ENCODE measurements at regions of chr21 and their contacts with region 1.

Region 1: DNA sequence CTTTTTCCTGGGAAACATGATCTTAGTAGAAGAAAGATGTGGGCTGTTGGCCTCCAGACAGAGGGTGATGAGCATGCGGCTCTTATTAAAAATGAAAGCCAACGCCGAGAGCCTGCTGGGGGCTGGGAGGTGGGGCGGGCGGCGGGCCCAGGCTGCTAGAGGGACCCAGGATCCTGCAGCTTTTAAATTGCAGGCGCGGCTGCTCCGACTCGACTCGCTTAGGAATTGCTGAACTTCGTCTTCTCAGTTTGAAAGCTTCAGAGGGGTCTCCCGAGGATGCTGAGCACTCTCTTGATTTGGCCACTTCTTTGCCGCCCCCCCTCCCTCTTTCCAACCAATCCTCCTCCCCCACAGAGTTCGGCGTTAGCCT is 1.2 kb downstream of the AGPAT3 start:
- DNase-seq: no peak
- H3K4me3 Mint-ChIP-seq: peak overlapping the region; percentile 92
- H3K27ac Mint-ChIP-seq: peak overlapping the region; percentile 92
- H3K4me1 Mint-ChIP-seq: peaks cover 44% of the 10 kb centered on the region
- H3K27me3 Mint-ChIP-seq: peaks cover 2% of the 10 kb centered on the region

Region 2: GRCh38 chr21:43574741-43575472 is 291.3 kb before region 1 on chr21:
- intact Hi-C with region 1: no loop called
- DNase-seq: no peak
- H3K4me3 Mint-ChIP-seq: no peak overlapping the region
- H3K27ac Mint-ChIP-seq: no peak overlapping the region
- H3K4me1 Mint-ChIP-seq: no peaks in the 10 kb centered on the region
- H3K27me3 Mint-ChIP-seq: peaks cover 11% of the 10 kb centered on the region

Region 3: GRCh38 chr21:43740497-43741156 is 125.6 kb before region 1 on chr21:
- intact Hi-C with region 1: no loop called
- DNase-seq: no peak
- H3K4me3 Mint-ChIP-seq: no peak overlapping the region
- H3K27ac Mint-ChIP-seq: no peak overlapping the region
- H3K4me1 Mint-ChIP-seq: peaks cover 5% of the 10 kb centered on the region
- H3K27me3 Mint-ChIP-seq: no peaks in the 10 kb centered on the region

Region 4: GRCh38 chr21:43789276-43790009 is 76.8 kb before region 1 on chr21 and contains the start of gene RRP1:
- intact Hi-C with region 1: loop called (anchors 2 kb)
- DNase-seq: peak; percentile 94
- H3K4me3 Mint-ChIP-seq: peak within 1 kb of the TSS; percentile 95
- H3K27ac Mint-ChIP-seq: peak within 1 kb of the TSS; percentile 94
- H3K4me1 Mint-ChIP-seq: peaks cover 23% of the 10 kb centered on the region
- H3K27me3 Mint-ChIP-seq: no peaks in the 10 kb centered on the region
- total RNA-seq, gene RRP1: 90.9 and 91.8 TPM in 2 replicates

Region 5: GRCh38 chr21:43805275-43805800 is 60.9 kb before region 1 on chr21:
- intact Hi-C with region 1: no loop called
- DNase-seq: no peak
- H3K4me3 Mint-ChIP-seq: no peak overlapping the region
- H3K27ac Mint-ChIP-seq: no peak overlapping the region
- H3K4me1 Mint-ChIP-seq: no peaks in the 10 kb centered on the region
- H3K27me3 Mint-ChIP-seq: no peaks in the 10 kb centered on the region

Region 6: DNA sequence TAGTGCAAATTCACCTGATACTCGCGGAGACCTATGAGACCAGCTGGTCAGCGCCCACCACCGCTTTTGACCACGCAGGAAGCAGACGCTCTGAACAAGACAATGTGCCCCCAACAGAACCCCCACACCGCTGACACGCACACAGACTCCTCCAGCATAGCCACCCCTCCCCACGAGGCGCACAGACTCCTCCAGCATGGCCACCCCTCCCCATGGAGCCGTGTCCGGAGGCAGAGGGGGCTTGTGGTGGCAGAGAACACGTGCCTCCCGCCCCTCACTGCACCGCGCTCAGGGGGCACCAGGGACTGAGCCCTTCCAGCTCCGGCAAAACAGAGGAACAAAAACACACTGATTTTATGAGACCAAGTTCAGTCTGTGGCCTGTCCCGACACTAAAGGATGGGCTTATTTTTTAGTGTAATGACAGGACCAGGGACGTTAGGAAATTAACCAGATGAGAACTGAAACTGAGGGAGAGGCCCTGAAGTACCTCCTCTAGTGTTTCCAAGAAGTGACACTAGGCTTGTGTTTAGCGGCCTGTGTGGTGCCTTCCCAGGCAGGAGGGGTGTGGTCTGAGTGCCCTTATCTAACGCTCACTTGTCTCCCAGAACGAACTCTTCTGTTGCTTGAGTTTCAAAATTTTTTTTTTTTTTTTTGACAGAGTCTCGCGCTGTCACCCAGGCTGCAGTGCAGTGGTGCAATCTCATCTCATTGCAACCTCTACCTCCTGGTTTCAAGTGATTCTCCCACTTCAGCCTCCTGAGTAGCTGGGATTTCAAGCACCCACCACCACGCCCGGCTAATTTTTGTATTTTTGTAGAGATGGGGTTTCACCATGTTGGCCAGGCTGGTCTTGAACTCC is 11.2 kb before region 1 on chr21:
- intact Hi-C with region 1: loop called (anchors 1 kb)
- DNase-seq: peak; percentile 68
- H3K4me3 Mint-ChIP-seq: peak overlapping the region; percentile 56
- H3K27ac Mint-ChIP-seq: peak overlapping the region; percentile 86
- H3K4me1 Mint-ChIP-seq: peaks cover 31% of the 10 kb centered on the region
- H3K27me3 Mint-ChIP-seq: no peaks in the 10 kb centered on the region

Region 7: DNA sequence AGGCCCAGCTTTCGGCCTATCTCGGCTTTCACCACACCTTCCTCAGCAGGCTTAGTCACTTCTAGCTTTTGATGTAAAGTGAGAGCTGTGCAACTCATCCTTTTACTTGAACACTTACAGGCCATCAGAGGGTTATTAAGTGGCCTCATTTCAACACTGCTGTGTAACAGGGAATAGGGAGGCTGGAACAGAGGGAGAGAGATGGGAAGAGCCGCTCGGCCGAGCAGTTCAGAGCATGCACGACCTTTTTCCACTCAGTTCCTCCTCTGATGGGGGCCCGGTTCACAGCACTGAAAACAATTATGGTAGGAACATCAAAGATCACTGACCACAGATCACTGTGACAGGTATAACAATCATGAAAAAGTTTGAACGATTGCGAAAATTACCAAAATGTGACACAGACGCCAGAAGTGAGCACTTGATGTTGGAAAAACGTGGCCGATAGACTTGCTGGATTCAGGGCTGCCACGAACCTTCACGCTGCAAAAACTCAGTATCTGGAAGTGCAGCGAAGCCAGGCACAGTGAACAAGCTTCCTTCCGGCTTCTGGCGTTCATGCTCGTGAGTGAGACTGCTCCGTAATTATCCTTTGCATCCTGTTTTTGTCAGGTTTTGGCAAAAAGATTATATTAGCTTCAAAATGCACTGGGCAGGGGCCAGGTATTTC is 27.4 kb after region 1 on chr21:
- intact Hi-C with region 1: loop called (anchors 2 kb)
- DNase-seq: peak; percentile 12
- H3K4me3 Mint-ChIP-seq: peak overlapping the region; percentile 24
- H3K27ac Mint-ChIP-seq: peak overlapping the region; percentile 64
- H3K4me1 Mint-ChIP-seq: peaks cover 37% of the 10 kb centered on the region
- H3K27me3 Mint-ChIP-seq: no peaks in the 10 kb centered on the region

Region 8: GRCh38 chr21:43938751-43939442 is 72.7 kb after region 1 on chr21:
- intact Hi-C with region 1: loop called (anchors 2 kb)
- DNase-seq: peak; percentile 82
- H3K4me3 Mint-ChIP-seq: peak overlapping the region; percentile 76
- H3K27ac Mint-ChIP-seq: peak overlapping the region; percentile 61
- H3K4me1 Mint-ChIP-seq: peaks cover 20% of the 10 kb centered on the region
- H3K27me3 Mint-ChIP-seq: no peaks in the 10 kb centered on the region